ENCODE measurements at regions of chr12 and their contacts with region 1.

Region 1: DNA sequence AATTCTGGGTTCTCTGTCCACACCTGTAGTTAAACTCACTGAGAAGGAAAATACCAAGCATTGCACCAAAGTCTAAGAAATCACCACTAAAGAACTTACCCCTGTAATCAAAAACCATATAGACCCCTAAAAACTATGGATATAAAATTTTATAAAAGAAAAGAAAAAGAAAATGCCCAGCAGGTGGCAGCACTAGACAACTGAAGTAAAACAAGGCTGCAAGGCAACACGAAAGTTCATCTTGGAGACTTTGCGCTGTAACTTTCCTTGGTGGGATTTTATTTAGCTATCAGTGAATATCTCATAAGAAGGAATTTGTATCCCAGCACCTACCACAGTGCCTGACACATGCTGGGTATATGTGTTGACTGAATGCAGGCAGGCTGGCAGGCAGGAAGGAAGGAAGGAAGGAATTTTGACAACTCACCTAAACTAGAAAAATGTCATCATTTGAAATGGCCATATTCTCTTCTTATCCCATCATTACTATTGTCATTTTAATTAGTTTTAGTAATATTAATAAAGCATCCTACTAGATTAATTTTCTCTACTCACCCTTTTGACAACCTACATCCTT is 68.2 kb upstream of the ETV6 start:
- DNase-seq: peak; percentile 86
- H3K4me3 ChIP-seq: no peak overlapping the region
- H3K27ac ChIP-seq: no peak overlapping the region
- H3K4me1 ChIP-seq: peaks cover 29% of the 10 kb centered on the region
- CTCF ChIP-seq: peak; percentile 82

Region 2: GRCh38 chr12:11621797-11622423 is 40.6 kb after region 1 on chr12:
- CTCF ChIA-PET with region 1: no interaction called
- POLR2A ChIA-PET with region 1: interaction called, 5 read pairs
- intact Hi-C with region 1: loop called (anchors 2 kb)
- DNase-seq: peak; percentile 70
- H3K4me3 ChIP-seq: no peak overlapping the region
- H3K27ac ChIP-seq: peak overlapping the region; percentile 19
- H3K4me1 ChIP-seq: peaks cover 26% of the 10 kb centered on the region
- CTCF ChIP-seq: peak; percentile 72

Region 3: DNA sequence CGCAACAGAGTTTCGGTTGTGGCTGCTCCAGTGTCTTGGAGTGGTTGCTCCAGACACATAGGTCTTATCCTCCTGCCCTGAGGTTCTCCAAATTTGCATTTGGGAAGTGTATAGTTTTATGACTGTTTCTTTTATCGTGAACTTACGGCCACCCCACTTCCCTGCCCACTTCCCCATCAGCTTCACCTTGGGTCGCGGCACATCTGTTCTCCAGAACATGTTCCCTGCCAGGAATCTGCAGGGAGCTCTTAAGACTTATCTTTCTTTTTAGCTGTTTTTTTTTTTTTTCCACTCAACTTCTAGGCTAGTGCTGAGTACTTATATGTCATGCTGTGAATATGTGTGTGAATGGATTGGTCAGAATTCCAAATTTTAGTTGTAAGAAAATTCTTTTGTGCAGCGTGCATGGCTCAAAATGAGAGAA is 143.6 kb after region 1 on chr12:
- CTCF ChIA-PET with region 1: no interaction called
- POLR2A ChIA-PET with region 1: interaction called, 3 read pairs
- intact Hi-C with region 1: loop called (anchors 5 kb)
- DNase-seq: no peak
- H3K4me3 ChIP-seq: peak overlapping the region; percentile 1
- H3K27ac ChIP-seq: peak overlapping the region; percentile 91
- H3K4me1 ChIP-seq: peaks cover 85% of the 10 kb centered on the region
- CTCF ChIP-seq: no peak

Measured in OCI-LY7 (cell line).